ENCODE measurements at regions of chr9 and their contacts with region 1.

Region 1: DNA sequence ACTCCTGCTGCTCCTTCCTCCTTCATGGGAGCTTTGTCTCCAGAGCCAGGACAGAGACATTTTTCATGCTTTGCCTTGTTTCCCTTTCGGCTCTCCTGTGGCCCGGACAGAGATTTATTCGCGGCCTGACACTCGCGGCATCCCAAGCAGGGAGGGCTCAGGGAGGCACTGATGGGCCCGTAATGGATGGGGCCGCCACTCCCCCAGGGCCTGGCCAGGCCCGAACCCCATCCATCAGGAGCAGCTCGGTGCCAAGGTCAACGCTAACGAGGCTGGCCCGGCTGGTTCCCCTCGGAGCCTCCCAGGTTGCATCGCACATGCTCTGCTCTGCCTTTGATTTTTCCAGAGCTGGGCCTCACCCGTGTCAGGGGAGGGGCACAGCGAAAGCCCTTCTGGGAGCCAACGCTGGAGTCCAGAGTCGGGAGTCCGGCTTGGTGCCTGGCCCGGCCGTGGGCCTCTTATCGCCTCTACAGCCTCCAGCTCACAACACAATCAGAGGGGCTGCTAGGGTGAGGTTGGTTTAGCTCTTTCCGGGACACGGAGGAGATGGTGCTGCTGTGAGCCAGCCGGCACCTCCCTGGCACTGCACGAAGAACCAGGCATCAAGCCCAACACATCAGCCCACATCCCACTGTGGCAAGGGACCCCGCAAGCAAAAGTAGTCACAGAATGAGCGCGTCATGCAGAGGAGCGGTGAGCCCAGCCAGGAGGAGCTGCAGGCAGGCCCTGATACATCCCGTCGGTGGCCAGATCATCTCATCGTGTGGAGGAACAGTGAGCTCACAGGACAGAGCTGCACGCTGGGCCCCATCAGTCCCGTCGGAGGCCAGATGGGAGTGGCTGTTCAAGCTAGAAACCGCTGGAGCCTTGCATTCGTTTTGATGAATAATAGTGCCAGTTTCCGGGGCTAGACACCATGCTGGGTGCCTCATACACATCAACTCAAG is 72.2 kb upstream of the BARHL1 start:
- DNase-seq: no peak
- ATAC-seq: no peak
- H3K4me3 ChIP-seq: no peak overlapping the region
- H3K27ac ChIP-seq: no peak overlapping the region
- H3K4me1 ChIP-seq: peaks cover 0 to 15% of the 10 kb centered on the region in 2 donors
- H3K27me3 ChIP-seq: peaks cover 0 to 85% of the 10 kb centered on the region in 2 donors
- CTCF ChIP-seq: no peak

Region 2: GRCh38 chr9:132584601-132585560 is 74.7 kb after region 1 on chr9:
- intact Hi-C with region 1: no loop called
- DNase-seq: no peak
- ATAC-seq: no peak
- H3K4me3 ChIP-seq: no peak overlapping the region
- H3K27ac ChIP-seq: no peak overlapping the region
- H3K4me1 ChIP-seq: peaks cover 3 to 8% of the 10 kb centered on the region in 2 donors
- H3K27me3 ChIP-seq: peaks cover 97 to 100% of the 10 kb centered on the region in 2 donors
- CTCF ChIP-seq: no peak

Region 3: DNA sequence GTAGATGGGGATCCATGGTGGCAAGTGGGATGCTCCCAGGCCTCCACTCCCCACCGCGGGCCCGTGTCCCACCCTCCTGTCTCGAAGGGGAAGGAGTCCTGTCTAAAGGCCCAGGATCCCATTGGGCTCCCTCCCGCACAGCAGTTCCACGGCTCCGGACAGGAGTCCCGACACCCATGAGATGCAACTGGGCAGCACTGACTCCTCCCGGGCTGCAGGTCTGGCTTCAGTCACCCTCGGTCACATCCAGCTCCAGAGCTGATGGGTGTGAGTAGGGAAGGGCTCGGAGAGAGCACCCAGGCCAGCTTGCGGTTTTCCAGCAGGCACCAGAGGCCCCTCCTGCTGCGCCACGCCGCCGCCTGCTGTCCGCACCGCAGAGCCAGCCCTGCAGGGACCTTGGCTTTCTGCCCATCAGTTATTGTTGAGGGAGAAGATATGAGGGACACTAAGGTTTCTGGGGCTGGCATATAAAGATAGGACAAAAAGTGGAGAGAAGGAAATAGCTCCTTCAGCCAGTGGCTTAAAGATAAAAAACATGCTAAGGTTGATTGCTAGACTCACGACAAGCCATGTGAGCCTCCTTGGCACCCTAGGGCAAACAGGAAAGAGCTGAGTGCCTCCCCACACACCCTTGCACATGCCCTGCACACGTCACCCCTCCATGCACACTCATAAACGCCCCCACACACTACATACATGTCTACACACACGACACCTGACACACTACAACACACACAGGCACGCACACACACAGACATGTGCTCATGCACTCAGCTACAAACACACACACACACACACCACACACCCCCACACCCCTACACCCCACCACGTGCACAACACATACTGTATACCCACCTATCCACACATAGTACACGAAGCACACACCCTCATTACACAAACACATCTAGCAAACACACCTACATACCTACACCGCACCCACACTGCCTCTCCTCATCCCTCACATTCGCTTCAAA is 288.9 kb after region 1 on chr9:
- intact Hi-C with region 1: loop called in 1 of 2 experiments (anchors 10 kb)
- DNase-seq: peak in 2 of 4 donors; percentile 45 to 51
- ATAC-seq: peak; percentile 89
- H3K4me3 ChIP-seq: no peak overlapping the region
- H3K27ac ChIP-seq: no peak overlapping the region
- H3K4me1 ChIP-seq: peaks cover 0 to 8% of the 10 kb centered on the region in 2 donors
- H3K27me3 ChIP-seq: peaks cover 0 to 40% of the 10 kb centered on the region in 2 donors
- CTCF ChIP-seq: peak in 1 of 2 donors; percentile 37

Measured in left lung (tissue), 14 donors.